Activated CD8-positive, alpha-beta memory T cell treated with anti-CD3 and anti-CD28 coated beads, Interleukin-2, amount 10 ng/mL, durations not matched to agents 7 days and 5 days (primary cell): ENCODE measurements at regions of chr12 and their contacts with region 1.

Region 1: DNA sequence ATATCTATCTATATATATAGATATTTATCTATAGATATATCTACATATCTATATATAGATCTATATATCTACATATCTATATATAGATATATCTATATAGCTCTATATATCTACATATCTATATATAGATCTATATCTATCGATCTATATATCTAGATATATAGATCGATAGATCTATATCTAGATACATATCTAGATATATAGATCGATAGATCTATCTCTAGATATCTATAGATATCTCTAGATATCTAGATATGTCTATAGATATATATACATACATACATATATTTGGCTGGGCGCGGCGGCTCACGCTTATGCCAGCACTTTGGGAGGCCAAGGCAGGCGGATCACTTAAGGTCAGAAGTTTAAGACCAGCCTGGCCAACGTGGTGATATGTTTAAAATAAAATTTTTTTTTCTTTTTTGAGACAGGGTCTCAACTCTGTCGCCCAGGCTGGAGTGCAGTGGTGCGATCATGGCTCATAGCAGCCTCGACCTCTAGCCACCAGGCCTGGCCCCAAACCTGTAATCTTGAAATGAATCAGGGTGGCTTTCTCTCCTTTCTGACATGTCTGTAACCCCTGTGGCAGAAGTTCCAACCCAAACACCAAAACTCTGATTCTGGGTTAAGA is 18.1 kb downstream of the ARPC3 start:
- DNase-seq: peak; percentile 55
- ATAC-seq: no peak
- H3K4me3 Mint-ChIP-seq: no peak overlapping the region
- H3K27ac Mint-ChIP-seq: no peak overlapping the region
- H3K4me1 Mint-ChIP-seq: peaks cover 10% of the 10 kb centered on the region
- H3K27me3 Mint-ChIP-seq: no peaks in the 10 kb centered on the region

Region 2: GRCh38 chr12:110100315-110100970 is 331.6 kb before region 1 on chr12:
- CTCF ChIA-PET with region 1: interaction called, 28 read pairs
- DNase-seq: peak; percentile 74
- ATAC-seq: peak; percentile 80
- H3K4me3 Mint-ChIP-seq: no peak overlapping the region
- H3K27ac Mint-ChIP-seq: peak overlapping the region; percentile 81
- H3K4me1 Mint-ChIP-seq: peaks cover 11% of the 10 kb centered on the region
- H3K27me3 Mint-ChIP-seq: no peaks in the 10 kb centered on the region

Region 3: DNA sequence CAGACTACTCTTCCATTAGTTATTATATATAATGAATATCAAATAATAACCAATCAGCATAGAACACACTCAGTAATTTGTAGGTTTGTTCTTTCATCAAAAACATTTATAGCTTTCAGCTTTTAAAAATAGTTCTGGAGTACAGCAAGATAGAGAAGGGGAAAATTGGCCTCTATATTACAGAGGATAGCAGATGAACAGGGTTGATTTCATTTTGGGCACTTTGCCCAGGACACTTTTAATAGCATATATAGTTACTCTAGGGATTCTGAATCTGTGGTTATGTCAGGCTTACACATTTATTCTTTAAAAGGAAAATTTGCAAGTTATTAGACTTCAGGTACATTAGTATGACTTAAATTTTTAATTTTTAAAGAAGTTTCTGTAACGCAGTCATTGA is 255.3 kb before region 1 on chr12:
- CTCF ChIA-PET with region 1: no interaction called
- DNase-seq: no peak
- ATAC-seq: no peak
- H3K4me3 Mint-ChIP-seq: no peak overlapping the region
- H3K27ac Mint-ChIP-seq: no peak overlapping the region
- H3K4me1 Mint-ChIP-seq: no peaks in the 10 kb centered on the region
- H3K27me3 Mint-ChIP-seq: no peaks in the 10 kb centered on the region

Region 4: DNA sequence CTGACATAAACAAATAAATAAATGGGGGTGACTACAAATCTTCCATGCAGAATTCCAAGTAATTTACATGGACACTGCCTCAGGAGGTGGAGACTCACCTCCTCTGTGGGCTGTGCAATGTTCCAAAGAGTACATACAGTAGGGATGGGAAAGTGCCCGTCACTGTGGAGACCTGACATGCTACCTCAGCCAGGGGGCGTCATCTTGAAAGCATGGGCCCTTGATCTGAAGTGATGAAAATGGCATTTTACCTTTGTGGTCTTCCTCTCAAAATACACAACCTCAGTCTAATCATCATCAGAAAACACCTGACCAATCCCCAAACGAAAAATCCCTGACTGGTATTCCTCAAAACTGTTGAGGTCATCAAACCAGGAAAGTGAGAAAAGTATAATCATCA is 77.0 kb before region 1 on chr12:
- CTCF ChIA-PET with region 1: interaction called, 19 read pairs
- DNase-seq: peak; percentile 58
- ATAC-seq: peak; percentile 67
- H3K4me3 Mint-ChIP-seq: no peak overlapping the region
- H3K27ac Mint-ChIP-seq: no peak overlapping the region
- H3K4me1 Mint-ChIP-seq: peaks cover 20% of the 10 kb centered on the region
- H3K27me3 Mint-ChIP-seq: no peaks in the 10 kb centered on the region

Region 5: GRCh38 chr12:110403146-110403975 is 28.7 kb before region 1 on chr12 and contains the start of gene ANAPC7:
- CTCF ChIA-PET with region 1: interaction called, 18 read pairs
- DNase-seq: peak; percentile 90
- ATAC-seq: peak; percentile 93
- H3K4me3 Mint-ChIP-seq: peak within 1 kb of the TSS; percentile 100
- H3K27ac Mint-ChIP-seq: peak within 1 kb of the TSS; percentile 99
- H3K4me1 Mint-ChIP-seq: peaks cover 26% of the 10 kb centered on the region
- H3K27me3 Mint-ChIP-seq: no peaks in the 10 kb centered on the region
- total RNA-seq, gene ANAPC7: 55.3 to 74.9 TPM

Region 6: DNA sequence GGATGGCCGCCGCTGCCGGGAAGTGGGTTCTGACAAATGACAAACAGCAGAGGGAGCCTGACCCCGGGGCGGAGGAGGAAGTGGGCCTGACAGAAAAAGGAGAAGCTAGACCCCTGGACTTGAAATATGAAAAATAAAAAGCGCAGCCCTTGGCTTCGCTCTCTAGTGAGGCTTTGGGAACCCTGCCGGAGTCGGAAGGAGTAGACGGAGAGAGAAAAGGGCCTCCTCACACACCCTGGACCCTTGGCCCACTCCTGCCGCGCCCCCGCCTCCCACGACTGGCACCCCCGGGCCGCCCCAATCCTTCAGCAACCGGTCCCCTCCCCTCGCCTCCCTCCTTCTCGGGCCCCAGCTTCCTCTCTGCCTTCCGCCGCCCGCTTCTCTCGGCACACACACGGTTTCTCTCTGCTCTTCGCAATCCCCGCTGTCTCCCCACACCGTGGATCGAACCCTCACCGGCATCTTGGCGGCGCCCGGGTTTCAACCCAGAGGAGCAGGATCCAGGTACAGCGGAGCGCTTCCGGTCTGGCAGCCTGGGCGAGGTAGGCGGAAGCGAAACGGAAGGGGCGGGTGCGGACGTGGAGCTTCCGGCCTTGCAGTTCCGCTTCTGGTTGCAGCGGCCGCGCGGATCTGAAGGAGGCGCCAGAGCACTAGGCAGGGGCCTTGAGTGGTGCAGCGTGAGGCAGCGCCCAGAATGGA is 17.9 kb after region 1 on chr12 and contains the start of gene ARPC3:
- CTCF ChIA-PET with region 1: interaction called, 28 read pairs
- DNase-seq: peak; percentile 98
- ATAC-seq: peak; percentile 98
- H3K4me3 Mint-ChIP-seq: peak within 1 kb of the TSS; percentile 95
- H3K27ac Mint-ChIP-seq: peak within 1 kb of the TSS; percentile 100
- H3K4me1 Mint-ChIP-seq: peaks cover 47% of the 10 kb centered on the region
- H3K27me3 Mint-ChIP-seq: no peaks in the 10 kb centered on the region
- total RNA-seq, gene ARPC3: 369 to 418 TPM

Region 7: DNA sequence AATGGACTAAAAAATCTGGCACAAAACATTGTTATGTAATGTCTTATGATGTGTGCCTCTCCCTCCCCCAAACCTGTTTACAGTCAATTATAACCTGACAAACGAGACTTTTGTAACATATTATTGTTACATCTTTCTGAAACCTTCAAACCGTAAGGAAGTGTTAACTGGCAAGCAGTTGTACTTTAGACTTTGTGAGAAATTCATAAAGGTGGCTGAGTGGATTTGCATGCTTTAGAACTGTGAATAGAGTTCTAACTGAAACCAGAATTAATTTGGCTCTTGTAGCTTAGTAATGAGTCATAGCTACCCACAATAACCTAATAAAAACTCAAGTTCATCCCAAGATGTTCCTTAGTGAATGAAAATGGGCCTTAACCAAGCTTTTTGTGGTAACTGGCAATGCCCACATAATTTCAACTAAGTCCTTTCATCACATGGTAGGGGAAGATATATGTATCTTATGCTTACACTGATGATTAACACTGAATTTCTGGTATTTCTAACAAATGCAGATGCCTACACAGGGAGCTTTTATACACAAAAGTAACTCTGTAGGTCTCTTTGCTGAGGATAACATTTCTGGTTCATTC is 99.8 kb after region 1 on chr12:
- CTCF ChIA-PET with region 1: no interaction called
- DNase-seq: no peak
- ATAC-seq: peak; percentile 47
- H3K4me3 Mint-ChIP-seq: no peak overlapping the region
- H3K27ac Mint-ChIP-seq: peak overlapping the region; percentile 35
- H3K4me1 Mint-ChIP-seq: peaks cover 19% of the 10 kb centered on the region
- H3K27me3 Mint-ChIP-seq: no peaks in the 10 kb centered on the region